Activated T-helper 1 cell treated with anti-CD3 and anti-CD28 coated beads, Interleukin-12 subunit alpha, Interleukin-12 subunit beta, Interleukin-2, Interleukin-4 antibody, amounts not matched to agents 30 ng/mL and 10 ng/mL and 1 ng/mL, durations not matched to agents 14 hours and 24 hours and 36 hours (primary cell): ENCODE measurements at regions of chr5 and their contacts with region 1.

Region 1: GRCh38 chr5:66864331-66864840 is 268.2 kb downstream of the MAST4 start:
- DNase-seq: peak; percentile 12
- H3K4me3 Mint-ChIP-seq: no peak overlapping the region
- H3K27ac Mint-ChIP-seq: no peak overlapping the region
- H3K4me1 Mint-ChIP-seq: peaks cover 62% of the 10 kb centered on the region
- H3K27me3 Mint-ChIP-seq: peaks cover 3% of the 10 kb centered on the region

Region 2: DNA sequence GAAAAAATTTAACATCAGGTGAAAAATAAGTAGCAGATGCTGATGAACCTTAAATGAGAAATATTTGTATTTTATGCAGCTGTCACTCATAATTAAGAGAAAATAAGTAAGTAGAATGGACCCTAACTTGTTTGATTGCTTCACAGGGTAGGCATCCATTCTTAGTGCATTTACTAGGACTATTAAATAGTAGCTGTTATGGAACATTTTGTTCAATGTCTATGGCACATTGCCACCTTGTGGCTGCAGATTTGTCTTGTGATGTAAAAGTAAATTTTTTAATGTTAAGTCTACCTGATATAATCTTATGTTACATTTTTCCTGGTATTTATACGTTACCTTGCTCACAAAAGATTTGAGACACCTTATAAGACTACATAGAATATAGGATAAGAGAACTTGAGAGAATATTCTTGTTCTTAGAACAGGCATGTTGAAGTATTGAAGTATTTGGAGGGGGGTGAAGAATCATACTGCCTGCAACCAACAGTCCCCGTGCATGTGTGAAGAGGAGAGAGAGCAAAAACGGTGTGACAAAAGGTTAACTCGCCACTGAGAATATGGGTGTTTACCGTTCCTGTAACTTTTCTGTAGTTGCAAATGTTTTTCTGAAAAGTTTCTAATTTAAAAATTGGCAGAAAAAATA is 107.1 kb before region 1 on chr5:
- intact Hi-C with region 1: loop called (anchors 1 kb)
- DNase-seq: no peak
- H3K4me3 Mint-ChIP-seq: no peak overlapping the region
- H3K27ac Mint-ChIP-seq: no peak overlapping the region
- H3K4me1 Mint-ChIP-seq: no peaks in the 10 kb centered on the region
- H3K27me3 Mint-ChIP-seq: peaks cover 26% of the 10 kb centered on the region

Region 3: GRCh38 chr5:66814146-66814991 is 50.0 kb before region 1 on chr5:
- intact Hi-C with region 1: loop called (anchors 1 kb)
- DNase-seq: peak; percentile 47
- H3K4me3 Mint-ChIP-seq: peak overlapping the region; percentile 24
- H3K27ac Mint-ChIP-seq: no peak overlapping the region
- H3K4me1 Mint-ChIP-seq: peaks cover 78% of the 10 kb centered on the region
- H3K27me3 Mint-ChIP-seq: no peaks in the 10 kb centered on the region

Region 4: DNA sequence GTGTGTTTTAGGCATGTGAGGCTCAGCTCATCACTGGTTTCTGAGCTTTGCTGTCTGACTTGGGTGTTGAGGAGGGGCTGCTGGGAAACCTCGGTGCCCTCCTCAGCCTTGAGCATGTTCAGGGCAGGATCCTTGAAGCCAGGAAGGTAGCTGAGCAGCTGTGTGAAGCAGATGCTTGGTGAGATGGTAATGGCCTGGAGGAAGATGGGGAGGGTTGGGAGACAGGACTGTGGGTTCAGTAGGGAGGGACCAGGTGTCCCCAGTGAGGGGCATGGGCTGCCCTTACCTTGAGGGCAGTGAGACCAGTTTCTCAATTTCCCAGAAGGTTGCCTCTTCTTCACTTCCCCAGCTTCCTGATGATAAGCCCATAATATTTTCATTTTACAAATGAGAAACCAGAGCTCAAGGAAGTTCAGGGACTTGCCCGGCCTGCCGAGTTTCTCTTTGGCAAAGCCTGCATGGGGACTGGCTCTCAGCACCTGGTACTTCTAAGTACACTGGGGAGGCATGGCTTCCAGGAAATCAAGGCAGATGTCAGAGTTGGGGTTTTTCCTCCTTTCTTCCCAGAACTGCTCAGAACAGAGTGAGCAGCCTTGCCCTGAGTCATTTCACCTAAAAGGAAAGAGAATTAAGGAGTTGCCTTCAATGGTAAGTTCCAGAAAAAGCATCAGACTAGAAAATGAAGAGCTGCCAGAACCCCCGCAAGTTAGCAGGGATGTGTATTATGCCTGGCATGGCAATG is 42.5 kb before region 1 on chr5:
- intact Hi-C with region 1: loop called (anchors 2 kb)
- DNase-seq: peak; percentile 56
- H3K4me3 Mint-ChIP-seq: peak overlapping the region; percentile 74
- H3K27ac Mint-ChIP-seq: peak overlapping the region; percentile 93
- H3K4me1 Mint-ChIP-seq: peaks cover 83% of the 10 kb centered on the region
- H3K27me3 Mint-ChIP-seq: no peaks in the 10 kb centered on the region

Region 5: DNA sequence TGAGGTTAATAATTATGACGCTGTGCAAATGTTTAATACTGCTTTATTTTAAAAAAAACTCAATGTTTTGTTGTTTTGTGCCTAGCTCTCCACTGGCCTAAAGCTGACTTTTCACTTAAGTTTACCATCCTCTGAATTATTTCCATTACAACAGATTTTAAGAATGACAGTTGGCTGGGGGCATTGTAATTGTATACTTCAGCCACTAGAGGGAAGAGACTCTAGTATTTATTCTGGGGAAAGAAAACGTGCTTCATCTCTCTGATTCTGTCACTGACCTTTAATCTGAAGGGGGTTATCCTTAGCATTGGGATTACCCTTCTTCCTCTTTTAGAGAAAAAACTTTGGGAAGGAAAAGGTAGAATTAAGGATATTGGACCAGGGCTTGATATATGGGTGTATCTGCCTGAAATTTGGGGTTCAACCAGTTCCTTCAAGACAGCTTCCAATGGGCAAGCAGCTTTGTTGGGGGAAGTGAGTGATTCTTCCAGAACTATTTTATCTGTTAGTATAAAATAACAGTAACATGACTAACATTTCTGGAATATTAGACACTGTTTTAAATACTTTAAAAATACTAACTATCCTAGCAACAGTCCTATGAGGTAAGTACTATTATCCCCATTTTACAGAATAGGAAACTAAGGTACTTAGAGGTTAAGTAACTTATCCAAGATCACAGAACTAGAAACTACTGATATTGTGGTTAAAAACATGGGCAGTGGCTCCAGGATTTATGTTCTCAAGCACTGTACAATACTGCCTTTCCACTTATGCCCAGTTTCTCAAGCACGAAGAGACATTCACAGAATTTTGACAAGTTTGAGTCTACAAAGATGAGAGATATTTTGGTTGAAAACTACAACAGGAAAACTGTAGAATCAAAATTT is 123.8 kb after region 1 on chr5:
- intact Hi-C with region 1: no loop called
- DNase-seq: no peak
- H3K4me3 Mint-ChIP-seq: no peak overlapping the region
- H3K27ac Mint-ChIP-seq: no peak overlapping the region
- H3K4me1 Mint-ChIP-seq: peaks cover 31% of the 10 kb centered on the region
- H3K27me3 Mint-ChIP-seq: no peaks in the 10 kb centered on the region